ENCODE measurements at regions of chr6 and their contacts with region 1.

Region 1: GRCh38 chr6:15245361-15246216 is at the start of gene JARID2:
- DNase-seq: peak; percentile 98
- H3K4me3 Mint-ChIP-seq: peak within 1 kb of the TSS; percentile 99
- H3K27ac Mint-ChIP-seq: peak within 1 kb of the TSS; percentile 95
- H3K4me1 Mint-ChIP-seq: peaks cover 28% of the 10 kb centered on the region
- H3K27me3 Mint-ChIP-seq: peaks cover 2% of the 10 kb centered on the region
- total RNA-seq, gene JARID2: 48.7 and 49.5 TPM in 2 replicates

Region 2: DNA sequence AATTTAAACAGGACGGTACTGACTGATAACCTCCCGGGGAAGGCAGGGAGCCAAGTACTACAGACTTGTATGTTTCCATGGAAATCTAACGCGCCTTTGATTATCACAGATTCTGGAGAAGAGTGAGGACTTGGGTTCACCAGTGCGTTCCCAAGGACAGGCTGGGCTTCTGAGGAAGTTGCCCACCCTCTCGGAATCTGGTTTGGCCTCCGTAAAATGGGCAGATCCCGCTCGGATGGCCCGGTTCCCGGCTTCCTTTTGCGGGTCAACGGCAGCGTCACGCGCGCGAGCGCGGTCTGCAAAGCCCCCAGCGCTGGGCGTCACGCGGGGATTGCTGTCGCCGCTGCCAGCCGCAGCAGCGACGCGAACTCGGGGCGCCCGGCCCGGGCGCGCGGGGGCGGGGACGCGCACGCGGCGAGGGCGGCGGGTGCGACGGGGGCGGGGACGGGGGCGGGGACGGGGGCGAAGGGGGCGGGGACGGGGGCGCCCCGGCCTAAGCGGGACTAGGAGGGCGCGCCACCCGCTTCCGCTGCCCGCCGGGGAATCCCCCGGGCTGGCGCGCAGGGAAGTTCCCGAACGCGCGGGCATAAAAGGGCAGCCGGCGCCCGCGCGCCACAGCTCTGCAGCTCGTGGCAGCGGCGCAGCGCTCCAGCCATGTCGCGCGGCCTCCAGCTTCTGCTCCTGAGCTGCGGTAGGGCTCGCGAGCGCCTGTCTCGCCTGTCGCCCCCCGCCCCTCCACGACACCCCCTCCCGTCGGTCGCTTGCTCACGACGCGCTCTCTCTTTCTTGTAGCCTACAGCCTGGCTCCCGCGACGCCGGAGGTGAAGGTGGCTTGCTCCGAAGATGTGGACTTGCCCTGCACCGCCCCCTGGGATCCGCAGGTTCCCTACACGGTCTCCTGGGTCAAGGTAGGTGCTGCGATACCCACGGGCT is 1128.2 kb before region 1 on chr6 and contains the start of gene CD83:
- intact Hi-C with region 1: loop called (anchors 2 kb)
- DNase-seq: peak; percentile 95
- H3K4me3 Mint-ChIP-seq: peak within 1 kb of the TSS; percentile 89
- H3K27ac Mint-ChIP-seq: peak within 1 kb of the TSS; percentile 96
- H3K4me1 Mint-ChIP-seq: peaks cover 39% of the 10 kb centered on the region
- H3K27me3 Mint-ChIP-seq: peaks cover 8% of the 10 kb centered on the region
- total RNA-seq, gene CD83: 80.2 and 84.8 TPM in 2 replicates

Region 3: GRCh38 chr6:14452567-14453527 is 792.7 kb before region 1 on chr6:
- intact Hi-C with region 1: loop called (anchors 5 kb)
- DNase-seq: peak; percentile 90
- H3K4me3 Mint-ChIP-seq: peak overlapping the region; percentile 65
- H3K27ac Mint-ChIP-seq: peak overlapping the region; percentile 95
- H3K4me1 Mint-ChIP-seq: peaks cover 81% of the 10 kb centered on the region
- H3K27me3 Mint-ChIP-seq: no peaks in the 10 kb centered on the region

Region 4: GRCh38 chr6:14711056-14711703 is 534.4 kb before region 1 on chr6:
- intact Hi-C with region 1: loop called (anchors 5 kb)
- DNase-seq: peak; percentile 90
- H3K4me3 Mint-ChIP-seq: peak overlapping the region; percentile 24
- H3K27ac Mint-ChIP-seq: peak overlapping the region; percentile 95
- H3K4me1 Mint-ChIP-seq: peaks cover 42% of the 10 kb centered on the region
- H3K27me3 Mint-ChIP-seq: no peaks in the 10 kb centered on the region

Region 5: DNA sequence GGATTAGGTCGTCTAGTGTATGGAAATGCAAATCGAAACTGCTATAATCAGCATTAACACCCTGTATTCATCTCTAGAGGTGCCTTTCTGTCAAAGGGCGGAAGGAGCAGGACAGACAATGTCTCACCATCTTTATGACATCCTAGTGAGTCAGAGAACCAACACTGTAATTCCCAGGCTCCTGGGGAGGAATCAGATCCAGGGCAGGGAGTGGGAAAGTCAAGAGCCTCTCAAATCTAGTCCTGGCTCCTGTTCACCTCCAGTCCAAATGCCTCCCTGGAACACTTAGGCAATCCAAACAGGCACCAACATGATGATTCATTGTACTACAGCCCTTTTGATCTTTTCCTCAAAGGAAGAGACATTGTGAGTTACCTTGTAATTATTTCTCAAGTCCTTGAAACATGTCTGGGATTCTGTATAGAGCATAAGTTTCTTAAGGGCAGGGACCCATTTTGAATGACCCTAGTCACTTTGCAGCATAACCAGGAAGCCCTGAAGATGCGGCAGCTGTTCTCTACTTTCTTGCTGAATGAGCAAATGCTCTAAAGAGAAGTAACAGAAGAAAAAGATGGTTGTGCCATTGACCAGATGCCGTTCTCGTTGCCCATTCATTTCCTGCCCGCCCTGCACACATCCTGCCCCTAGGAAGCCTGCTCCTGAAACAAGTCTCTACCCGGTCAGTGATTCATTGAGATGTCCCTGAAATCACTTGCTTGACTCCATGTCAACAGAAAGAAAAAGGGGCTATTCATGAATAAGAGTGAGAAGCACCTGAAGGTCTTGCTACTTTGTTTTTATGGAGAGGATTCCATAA is 112.5 kb before region 1 on chr6:
- intact Hi-C with region 1: loop called (anchors 5 kb)
- DNase-seq: no peak
- H3K4me3 Mint-ChIP-seq: no peak overlapping the region
- H3K27ac Mint-ChIP-seq: no peak overlapping the region
- H3K4me1 Mint-ChIP-seq: peaks cover 38% of the 10 kb centered on the region
- H3K27me3 Mint-ChIP-seq: no peaks in the 10 kb centered on the region

Region 6: DNA sequence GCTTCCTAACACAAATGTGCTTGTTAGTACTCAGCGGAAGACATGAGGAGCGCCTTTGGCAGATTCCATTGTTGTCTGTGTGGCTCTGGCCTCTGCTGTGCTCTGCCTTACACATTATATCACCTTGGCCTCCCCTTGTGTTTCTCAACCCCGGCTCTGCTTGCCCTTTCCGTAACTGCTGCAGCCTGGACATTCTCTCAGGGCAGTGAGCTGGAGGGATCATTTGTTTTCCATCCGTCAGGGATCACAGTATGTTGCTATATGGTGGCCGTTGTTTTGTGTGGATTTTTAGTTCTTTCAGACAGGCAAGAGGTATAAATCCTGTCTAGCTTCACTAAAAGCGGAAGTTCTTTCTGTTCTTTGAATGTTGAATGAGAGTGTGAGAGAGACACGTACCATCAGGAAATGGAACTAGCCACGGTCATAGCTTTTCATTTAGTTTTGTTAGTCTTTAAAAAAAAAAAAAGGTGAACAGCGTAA is 175.4 kb after region 1 on chr6:
- intact Hi-C with region 1: loop called (anchors 5 kb)
- DNase-seq: peak; percentile 70
- H3K4me3 Mint-ChIP-seq: peak overlapping the region; percentile 84
- H3K27ac Mint-ChIP-seq: peak overlapping the region; percentile 95
- H3K4me1 Mint-ChIP-seq: peaks cover 63% of the 10 kb centered on the region
- H3K27me3 Mint-ChIP-seq: no peaks in the 10 kb centered on the region

Region 7: GRCh38 chr6:15621203-15622044 is 375.8 kb after region 1 on chr6:
- intact Hi-C with region 1: loop called (anchors 5 kb)
- DNase-seq: no peak
- H3K4me3 Mint-ChIP-seq: no peak overlapping the region
- H3K27ac Mint-ChIP-seq: peak overlapping the region; percentile 80
- H3K4me1 Mint-ChIP-seq: peaks cover 11% of the 10 kb centered on the region
- H3K27me3 Mint-ChIP-seq: no peaks in the 10 kb centered on the region